Ovary (tissue), 10 donors: ENCODE measurements at regions of chr3 and their contacts with region 1.

Region 1: DNA sequence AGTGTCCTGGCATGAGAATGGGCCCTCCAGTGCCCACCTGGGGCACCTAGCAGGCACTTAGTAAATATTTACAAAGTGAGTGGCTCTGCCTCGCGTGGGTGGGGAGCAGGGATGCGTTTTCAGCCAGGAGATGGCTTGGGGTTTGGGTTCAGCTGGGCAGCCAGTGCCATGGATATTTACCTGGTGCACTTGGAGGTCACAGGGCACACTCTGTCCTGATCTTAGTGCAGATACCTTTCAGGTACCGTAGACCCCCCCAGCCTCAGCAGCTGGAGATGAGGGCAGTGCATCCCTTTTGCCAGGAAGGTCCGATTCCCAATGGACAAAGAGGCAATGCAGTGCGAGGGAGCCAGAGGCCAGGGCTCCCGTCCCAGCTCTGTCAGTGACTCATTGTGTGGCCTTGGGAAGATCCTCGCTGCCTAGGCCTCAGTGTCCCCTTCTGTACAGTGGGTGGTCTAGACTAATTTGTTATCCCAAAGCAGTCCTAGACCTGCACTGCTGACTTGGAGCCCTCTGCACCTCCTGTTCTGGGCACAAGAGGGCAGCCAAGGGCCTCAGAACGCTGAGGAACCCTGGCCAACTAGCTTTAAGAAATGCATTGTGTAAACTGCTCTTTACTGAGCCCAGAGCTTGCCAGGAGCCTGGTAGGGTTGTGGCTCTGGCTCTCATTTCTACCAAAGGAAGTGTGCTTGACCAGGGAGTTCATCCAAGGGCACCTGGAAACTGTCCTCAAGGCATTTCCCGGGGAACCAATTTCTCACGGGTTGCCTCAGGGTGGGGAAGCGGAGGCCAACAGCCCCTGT is 16.0 kb downstream of the HDAC11 start:
- DNase-seq: peak; percentile 51 to 82 (median 75)
- H3K4me3 ChIP-seq: no peak overlapping the region
- H3K27ac ChIP-seq: no peak overlapping the region
- H3K4me1 ChIP-seq: peaks cover 2% of the 10 kb centered on the region
- H3K27me3 ChIP-seq: no peaks in the 10 kb centered on the region
- CTCF ChIP-seq: peak; percentile 58 to 80 (median 76)
- EP300 ChIP-seq: no peak
- POLR2A ChIP-seq: no peak

Region 2: GRCh38 chr3:13648060-13649001 is 152.2 kb after region 1 on chr3:
- intact Hi-C with region 1: loop called (anchors 2 to 5 kb)
- DNase-seq: peak; percentile 67 to 89 (median 80)
- H3K4me3 ChIP-seq: no peak overlapping the region
- H3K27ac ChIP-seq: no peak overlapping the region
- H3K4me1 ChIP-seq: peaks cover 3% of the 10 kb centered on the region
- H3K27me3 ChIP-seq: no peaks in the 10 kb centered on the region
- CTCF ChIP-seq: peak; percentile 77 to 86 (median 81)
- EP300 ChIP-seq: no peak
- POLR2A ChIP-seq: peak; percentile 17